ENCODE measurements at regions of chr3 and their contacts with region 1.

Region 1: DNA sequence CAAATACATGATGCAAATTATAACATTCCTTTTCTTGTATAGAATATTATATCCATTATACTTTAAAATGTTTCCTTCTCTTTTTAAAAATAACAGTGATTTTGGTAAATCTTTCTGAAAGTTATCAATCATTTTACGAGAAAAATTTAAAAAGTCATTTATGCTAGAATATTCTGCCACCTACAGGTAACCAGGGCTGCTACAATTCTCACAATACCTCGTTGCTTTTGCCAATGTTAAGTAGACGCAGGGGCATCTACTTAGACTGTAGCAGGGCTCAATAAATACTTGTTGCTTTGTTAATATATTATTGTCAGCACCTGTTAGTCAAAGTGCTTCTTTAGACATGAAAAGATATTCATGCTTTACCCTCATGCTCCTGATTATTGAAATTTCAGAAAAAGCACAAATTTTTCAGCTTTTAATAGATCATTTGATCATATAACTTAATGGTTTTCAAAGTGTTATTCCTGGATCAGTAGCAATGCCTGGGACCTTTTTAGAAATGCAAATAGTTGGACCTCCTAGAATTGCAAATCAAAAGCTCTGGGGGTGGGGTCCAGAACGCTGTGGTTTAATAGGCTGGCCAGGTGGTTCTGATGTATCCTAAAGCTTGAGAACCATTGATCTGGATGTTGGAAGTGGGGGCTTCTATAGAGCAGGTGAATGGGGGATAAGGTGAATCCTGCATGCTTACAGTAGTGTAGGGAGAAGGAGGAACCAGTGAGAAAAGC is 223.6 kb upstream of the PDZRN3 start:
- DNase-seq: no peak

Region 2: DNA sequence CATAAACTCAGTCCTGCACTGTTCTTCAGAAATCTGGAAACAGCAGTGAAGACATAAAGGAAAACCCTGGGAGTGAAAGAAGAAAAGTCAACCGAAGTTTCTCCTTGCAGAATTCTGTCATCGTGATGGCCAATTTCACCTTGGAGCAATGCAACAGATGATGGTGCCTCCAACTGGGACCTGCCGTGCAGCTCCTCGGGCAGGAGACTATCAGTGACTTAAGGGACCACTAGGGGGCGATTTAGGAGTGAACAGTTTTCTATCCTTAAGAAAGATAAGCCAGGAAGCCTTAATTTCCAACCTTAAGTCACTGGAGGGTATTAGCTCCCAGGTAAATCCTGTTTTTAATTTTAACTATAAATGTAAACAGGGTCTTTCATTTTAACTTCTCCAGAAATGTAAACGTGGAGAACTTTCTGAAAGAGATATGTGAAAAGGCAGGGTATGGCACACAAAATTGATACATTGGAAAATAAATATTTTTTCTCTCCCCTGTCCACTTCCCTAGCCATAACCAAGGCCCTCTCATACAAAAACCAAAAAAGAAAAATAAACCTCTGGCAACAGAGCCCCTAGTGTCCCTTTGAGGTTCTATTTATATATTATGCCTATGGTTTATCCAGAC is 339.9 kb before region 1 on chr3:
- intact Hi-C with region 1: loop called in 1 of 2 experiments (anchors 5 kb)
- DNase-seq: no peak

Region 3: DNA sequence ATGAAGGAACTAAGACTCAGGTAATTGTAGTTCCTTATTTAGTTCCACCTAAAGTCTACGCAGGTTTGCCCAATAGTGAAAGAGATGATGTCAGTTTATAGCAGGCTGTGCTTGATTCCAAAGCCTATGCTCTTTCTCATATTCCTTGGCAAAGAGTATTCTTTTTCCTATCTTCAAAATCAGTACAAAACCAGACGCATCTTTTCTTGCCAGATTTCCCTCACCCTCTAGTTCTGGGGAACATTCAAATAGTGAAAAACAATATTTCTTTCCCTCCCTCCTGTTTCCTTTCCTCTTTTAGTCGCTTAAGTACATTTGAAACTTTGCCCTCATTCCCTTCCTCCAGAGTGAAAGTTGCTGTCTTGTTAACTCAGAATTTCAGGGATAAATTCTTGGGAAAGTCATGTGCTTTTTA is 89.0 kb before region 1 on chr3:
- intact Hi-C with region 1: loop called in 1 of 2 experiments (anchors 10 kb)
- DNase-seq: no peak